Common myeloid progenitor, CD34-positive (primary cell): ENCODE measurements at regions of chr4 and their contacts with region 1.

Region 1: GRCh38 chr4:123661080-123661737 is 264.6 kb downstream of the SPRY1 start:
- DNase-seq: peak; percentile 15 to 34 (median 30)
- H3K4me3 ChIP-seq: no peak overlapping the region
- H3K27ac ChIP-seq: no peak overlapping the region
- H3K4me1 ChIP-seq: peaks cover 0 to 4% (median 0%) of the 10 kb centered on the region in 4 experiments
- H3K27me3 ChIP-seq: no peaks in the 10 kb centered on the region

Region 2: DNA sequence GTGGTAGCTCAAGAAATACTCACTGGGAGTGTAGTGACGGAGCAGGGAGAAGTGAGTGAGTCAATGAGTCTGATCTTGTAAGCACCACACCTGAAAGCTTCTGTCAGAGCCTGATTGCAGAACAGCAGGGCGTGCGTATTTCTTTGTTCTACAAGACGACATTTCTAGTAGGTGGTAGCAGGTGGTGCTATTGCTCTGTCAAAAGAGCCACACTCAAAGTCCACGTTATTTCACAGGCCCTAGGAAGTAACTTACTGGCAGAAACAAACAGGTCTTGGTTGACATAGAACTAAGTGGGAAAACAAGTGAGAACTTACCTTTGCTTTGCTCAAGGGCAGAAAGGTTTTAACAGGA is 311.0 kb before region 1 on chr4:
- CTCF ChIA-PET with region 1: interaction called, 10 read pairs
- POLR2A ChIA-PET with region 1: no interaction called
- DNase-seq: peak; percentile 70 to 85 (median 79)
- H3K4me3 ChIP-seq: no peak overlapping the region
- H3K27ac ChIP-seq: no peak overlapping the region
- H3K4me1 ChIP-seq: peaks cover 0 to 17% (median 7%) of the 10 kb centered on the region in 4 experiments
- H3K27me3 ChIP-seq: no peaks in the 10 kb centered on the region

Region 3: DNA sequence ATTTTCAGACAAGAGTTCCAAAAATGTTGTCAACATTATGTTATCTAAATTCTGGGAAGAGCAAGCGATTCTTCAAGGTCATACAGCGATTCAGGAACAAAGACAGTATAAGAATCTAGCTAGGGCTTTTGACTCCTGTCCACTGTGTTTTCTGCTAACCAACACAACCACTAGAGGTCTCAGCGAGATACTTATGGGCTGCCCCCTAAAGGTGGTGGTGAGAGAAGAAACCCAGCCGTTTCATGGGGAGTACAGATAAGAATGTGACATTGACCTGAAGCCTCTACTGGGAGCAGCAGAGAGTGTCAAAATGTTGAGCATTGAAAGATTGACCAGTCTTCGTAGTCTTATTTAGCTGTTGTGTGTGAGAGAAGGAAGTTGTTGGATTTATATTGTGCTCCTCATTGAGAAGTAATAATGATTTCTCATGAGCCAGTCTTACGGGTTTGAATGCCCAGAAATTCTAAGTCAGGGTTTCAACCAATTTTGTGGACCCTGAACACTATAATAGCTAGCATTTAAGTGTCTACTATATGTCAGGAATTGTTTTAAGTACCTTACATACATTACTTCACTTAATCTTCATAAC is 96.4 kb before region 1 on chr4:
- CTCF ChIA-PET with region 1: interaction called, 57 read pairs
- POLR2A ChIA-PET with region 1: no interaction called
- DNase-seq: peak; percentile 89 to 93 (median 93)
- H3K4me3 ChIP-seq: no peak overlapping the region
- H3K27ac ChIP-seq: no peak overlapping the region
- H3K4me1 ChIP-seq: peaks cover 0 to 6% (median 3%) of the 10 kb centered on the region in 4 experiments
- H3K27me3 ChIP-seq: no peaks in the 10 kb centered on the region

Region 4: DNA sequence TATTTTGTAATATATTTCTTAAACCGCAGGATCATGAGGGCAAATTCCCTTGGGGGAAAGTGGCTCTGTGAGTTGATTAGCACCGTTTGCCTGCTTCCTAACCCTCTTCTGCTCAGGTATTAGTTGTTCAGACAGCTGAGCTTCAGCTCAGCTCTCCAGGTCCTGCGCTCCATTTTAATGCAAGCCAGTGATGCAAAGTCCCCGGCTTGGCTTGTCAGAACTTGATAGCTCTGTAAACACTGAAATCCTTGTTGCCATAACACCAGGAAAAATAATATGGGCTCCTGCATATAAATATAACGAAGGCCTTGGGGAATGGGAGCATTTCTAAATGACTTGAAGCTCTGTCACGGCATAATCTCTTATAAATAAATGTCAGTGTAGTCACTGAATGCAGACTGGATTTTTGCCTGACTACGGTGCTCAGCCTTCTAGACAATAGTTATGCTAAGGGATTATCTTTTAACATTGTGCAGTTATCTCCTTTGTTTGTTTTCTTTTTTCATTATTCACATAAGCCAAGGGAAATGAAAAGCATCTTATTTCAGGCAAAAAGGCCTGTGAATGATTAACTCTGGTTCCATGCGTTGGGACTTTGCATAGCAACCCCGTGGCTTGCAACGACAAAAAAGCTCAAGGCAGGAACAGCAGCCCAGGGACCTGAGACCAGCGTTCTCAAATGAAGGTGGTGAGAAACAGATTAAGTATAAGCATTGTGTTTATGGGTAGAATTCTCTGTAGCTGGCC is 11.4 kb before region 1 on chr4:
- CTCF ChIA-PET with region 1: interaction called, 30 read pairs
- POLR2A ChIA-PET with region 1: no interaction called
- DNase-seq: peak in 1 of 3 donors; percentile 3
- H3K4me3 ChIP-seq: no peak overlapping the region
- H3K27ac ChIP-seq: no peak overlapping the region
- H3K4me1 ChIP-seq: peaks cover 0 to 12% (median 5%) of the 10 kb centered on the region in 4 experiments
- H3K27me3 ChIP-seq: no peaks in the 10 kb centered on the region